Mammary epithelial cell (primary cell): ENCODE measurements at regions of chr10 and their contacts with region 1.

Region 1: GRCh38 chr10:17200912-17201793 is at the start of gene TRDMT1:
- DNase-seq: peak; percentile 90
- H3K4me3 ChIP-seq: peak within 1 kb of the TSS; percentile 66 to 79 (median 73)
- H3K27ac ChIP-seq: peak within 1 kb of the TSS; percentile 92
- H3K4me1 ChIP-seq: peaks cover 20% of the 10 kb centered on the region
- H3K27me3 ChIP-seq: no peaks in the 10 kb centered on the region
- CTCF ChIP-seq: no peak
- total RNA-seq, gene TRDMT1: 3.5 to 6.2 TPM

Region 2: GRCh38 chr10:17216217-17216900 is 15.2 kb after region 1 on chr10:
- CTCF ChIA-PET with region 1: no interaction called
- dilution Hi-C with region 1: no loop called
- in situ Hi-C with region 1: no loop called
- intact Hi-C with region 1: loop called (anchors 1 kb)
- DNase-seq: peak; percentile 97
- H3K4me3 ChIP-seq: no peak overlapping the region
- H3K27ac ChIP-seq: peak overlapping the region; percentile 100
- H3K4me1 ChIP-seq: peaks cover 43% of the 10 kb centered on the region
- H3K27me3 ChIP-seq: no peaks in the 10 kb centered on the region
- CTCF ChIP-seq: no peak

Region 3: GRCh38 chr10:17353559-17354300 is 152.6 kb after region 1 on chr10:
- CTCF ChIA-PET with region 1: no interaction called
- dilution Hi-C with region 1: no loop called
- in situ Hi-C with region 1: no loop called
- intact Hi-C with region 1: loop called (anchors 10 kb)
- DNase-seq: peak; percentile 79
- H3K4me3 ChIP-seq: no peak overlapping the region
- H3K27ac ChIP-seq: peak overlapping the region; percentile 15
- H3K4me1 ChIP-seq: peaks cover 34% of the 10 kb centered on the region
- H3K27me3 ChIP-seq: no peaks in the 10 kb centered on the region
- CTCF ChIP-seq: no peak

Region 4: GRCh38 chr10:17430647-17431355 is 229.6 kb after region 1 on chr10:
- CTCF ChIA-PET with region 1: no interaction called
- dilution Hi-C with region 1: no loop called
- in situ Hi-C with region 1: no loop called
- intact Hi-C with region 1: no loop called
- DNase-seq: peak; percentile 59
- H3K4me3 ChIP-seq: no peak overlapping the region
- H3K27ac ChIP-seq: no peak overlapping the region
- H3K4me1 ChIP-seq: no peaks in the 10 kb centered on the region
- H3K27me3 ChIP-seq: no peaks in the 10 kb centered on the region
- CTCF ChIP-seq: peak; percentile 92 to 95